ENCODE measurements at regions of chr2 and their contacts with region 1.

Region 1: DNA sequence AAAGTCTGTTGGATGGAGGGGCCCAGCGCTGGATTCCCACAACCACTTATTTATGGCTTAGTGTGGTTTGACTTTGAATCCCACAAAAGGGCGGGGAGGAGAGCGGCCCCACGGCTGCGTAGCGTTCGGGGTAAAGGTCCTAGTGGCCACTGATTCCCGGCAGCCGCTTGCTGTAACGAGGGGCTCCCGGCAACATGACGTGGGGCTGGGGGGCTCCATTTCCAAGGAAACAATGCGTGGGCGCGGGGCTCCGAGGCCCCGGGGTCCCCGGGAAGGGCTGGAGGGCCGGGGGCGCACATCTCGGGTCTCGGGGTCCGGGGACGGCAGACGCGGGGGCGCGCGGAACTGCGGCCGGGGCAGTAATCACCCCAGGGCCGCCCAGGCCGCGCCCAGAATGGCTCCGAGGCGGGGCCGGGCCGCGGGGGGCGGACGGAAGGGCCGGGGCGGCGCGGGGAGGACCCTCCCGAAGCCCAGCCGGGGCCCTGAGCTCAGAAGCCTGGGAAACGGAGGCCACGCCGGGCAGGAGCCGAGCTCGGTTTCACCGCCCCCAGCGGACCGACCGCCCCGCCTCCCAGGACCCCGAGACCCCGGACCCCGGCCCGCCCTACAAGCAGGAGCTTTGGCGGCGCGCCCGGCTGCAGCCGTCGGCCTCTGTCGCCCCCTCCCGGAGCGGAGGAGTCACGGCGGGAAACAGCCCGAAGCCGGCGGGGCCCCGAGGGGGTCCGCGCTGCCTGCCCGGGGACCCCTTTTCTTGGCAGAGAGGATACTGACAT is 11.9 kb upstream of the MLPH start:
- DNase-seq: peak; percentile 86
- ATAC-seq: peak; percentile 72
- H3K4me3 Mint-ChIP-seq: peak overlapping the region; percentile 73
- H3K27ac Mint-ChIP-seq: peak overlapping the region; percentile 89
- H3K4me1 Mint-ChIP-seq: peaks cover 21% of the 10 kb centered on the region
- H3K27me3 Mint-ChIP-seq: peaks cover 15% of the 10 kb centered on the region

Region 2: GRCh38 chr2:237223201-237223861 is 251.8 kb before region 1 on chr2:
- CTCF ChIA-PET with region 1: no interaction called
- POLR2A ChIA-PET with region 1: no interaction called
- intact Hi-C with region 1: no loop called
- DNase-seq: no peak
- ATAC-seq: no peak
- H3K4me3 Mint-ChIP-seq: no peak overlapping the region
- H3K27ac Mint-ChIP-seq: no peak overlapping the region
- H3K4me1 Mint-ChIP-seq: peaks cover 11% of the 10 kb centered on the region
- H3K27me3 Mint-ChIP-seq: peaks cover 18% of the 10 kb centered on the region

Region 3: GRCh38 chr2:237421542-237422116 is 53.5 kb before region 1 on chr2:
- CTCF ChIA-PET with region 1: interaction called, 89 read pairs
- POLR2A ChIA-PET with region 1: interaction called, 4 read pairs
- intact Hi-C with region 1: loop called (anchors 1 kb)
- DNase-seq: peak; percentile 90
- ATAC-seq: peak; percentile 95
- H3K4me3 Mint-ChIP-seq: peak overlapping the region; percentile 50
- H3K27ac Mint-ChIP-seq: peak overlapping the region; percentile 83
- H3K4me1 Mint-ChIP-seq: peaks cover 45% of the 10 kb centered on the region
- H3K27me3 Mint-ChIP-seq: peaks cover 4% of the 10 kb centered on the region

Region 4: GRCh38 chr2:237427769-237428506 is 47.2 kb before region 1 on chr2:
- CTCF ChIA-PET with region 1: interaction called, 89 read pairs
- POLR2A ChIA-PET with region 1: interaction called, 4 read pairs
- intact Hi-C with region 1: loop called (anchors 2 kb)
- DNase-seq: peak; percentile 92
- ATAC-seq: peak; percentile 79
- H3K4me3 Mint-ChIP-seq: peak overlapping the region; percentile 34
- H3K27ac Mint-ChIP-seq: peak overlapping the region; percentile 97
- H3K4me1 Mint-ChIP-seq: peaks cover 91% of the 10 kb centered on the region
- H3K27me3 Mint-ChIP-seq: peaks cover 2% of the 10 kb centered on the region